ENCODE measurements at regions of chr5 and their contacts with region 1.

Region 1: DNA sequence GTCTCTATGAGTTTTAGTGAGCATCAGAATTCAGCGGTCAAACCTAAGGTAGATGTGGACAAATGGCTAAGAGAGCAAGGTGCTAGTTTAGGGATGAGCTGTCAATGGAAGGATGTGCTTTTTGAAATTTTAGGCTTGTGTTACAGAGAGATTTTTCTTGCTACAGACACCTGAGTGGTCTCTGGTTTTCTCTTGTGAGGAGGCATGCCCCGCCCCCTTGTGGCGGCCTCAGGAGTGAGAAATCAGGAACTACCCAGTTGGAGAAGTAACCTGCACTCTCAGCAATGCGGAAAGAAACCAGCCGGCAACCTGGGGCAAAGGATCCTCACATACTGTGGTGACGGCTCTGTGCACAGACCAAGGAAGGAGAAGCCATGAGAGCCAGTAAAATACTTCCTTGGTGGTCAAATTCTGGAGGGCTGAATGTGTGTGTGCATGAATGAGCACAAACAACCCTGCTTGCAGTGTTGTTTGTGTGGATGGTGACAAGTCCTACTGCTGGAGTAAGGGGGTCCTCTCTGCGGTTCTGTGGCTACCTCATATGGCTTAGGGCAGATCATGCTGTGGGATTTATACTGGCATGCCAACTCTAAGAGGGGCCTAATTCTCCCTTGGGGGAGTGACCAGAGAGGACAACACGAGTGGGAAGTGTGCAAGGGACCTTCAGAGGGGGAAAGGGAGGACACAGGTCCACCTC is 16.7 kb upstream of the HSD17B4 start:
- DNase-seq: peak; percentile 90
- H3K4me3 Mint-ChIP-seq: no peak overlapping the region
- H3K27ac Mint-ChIP-seq: no peak overlapping the region
- H3K4me1 Mint-ChIP-seq: peaks cover 32% of the 10 kb centered on the region
- H3K27me3 Mint-ChIP-seq: no peaks in the 10 kb centered on the region
- CTCF ChIP-seq: peak; percentile 87

Region 2: GRCh38 chr5:118987988-118988865 is 447.4 kb before region 1 on chr5 and contains the start of gene DTWD2:
- CTCF ChIA-PET with region 1: interaction called, 6 read pairs
- intact Hi-C with region 1: loop called (anchors 1 kb)
- DNase-seq: peak; percentile 99
- H3K4me3 Mint-ChIP-seq: peak within 1 kb of the TSS; percentile 82
- H3K27ac Mint-ChIP-seq: peak within 1 kb of the TSS; percentile 91
- H3K4me1 Mint-ChIP-seq: peaks cover 54% of the 10 kb centered on the region
- H3K27me3 Mint-ChIP-seq: no peaks in the 10 kb centered on the region
- CTCF ChIP-seq: peak; percentile 98
- total RNA-seq, gene DTWD2: 12.3 and 12.6 TPM in 2 replicates

Region 3: GRCh38 chr5:119418531-119419116 is 17.0 kb before region 1 on chr5:
- CTCF ChIA-PET with region 1: interaction called, 8 read pairs
- intact Hi-C with region 1: loop called (anchors 2 kb)
- DNase-seq: peak; percentile 74
- H3K4me3 Mint-ChIP-seq: peak overlapping the region; percentile 9
- H3K27ac Mint-ChIP-seq: peak overlapping the region; percentile 37
- H3K4me1 Mint-ChIP-seq: peaks cover 40% of the 10 kb centered on the region
- H3K27me3 Mint-ChIP-seq: no peaks in the 10 kb centered on the region
- CTCF ChIP-seq: no peak

Region 4: DNA sequence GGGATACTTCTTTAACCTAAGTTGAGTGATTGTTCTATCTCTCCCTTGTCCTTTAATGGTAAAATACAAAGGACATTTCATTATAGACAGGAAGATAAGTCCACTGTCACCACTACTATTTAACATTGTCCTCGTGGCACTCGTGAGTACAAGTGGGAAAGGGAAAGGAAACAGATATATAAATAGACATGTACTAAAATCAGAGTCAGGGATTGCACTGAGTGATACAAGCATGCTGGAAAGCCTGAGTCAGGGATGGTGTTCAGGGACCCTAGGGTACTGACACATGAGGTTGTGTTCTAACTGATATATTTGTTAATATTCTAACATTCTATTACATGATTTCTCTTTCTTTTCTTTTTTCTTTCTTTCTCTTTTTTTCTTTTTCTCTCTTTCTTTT is 119.0 kb after region 1 on chr5:
- CTCF ChIA-PET with region 1: no interaction called
- intact Hi-C with region 1: no loop called
- DNase-seq: no peak
- H3K4me3 Mint-ChIP-seq: no peak overlapping the region
- H3K27ac Mint-ChIP-seq: no peak overlapping the region
- H3K4me1 Mint-ChIP-seq: no peaks in the 10 kb centered on the region
- H3K27me3 Mint-ChIP-seq: no peaks in the 10 kb centered on the region
- CTCF ChIP-seq: no peak